ENCODE measurements at regions of chr2 and their contacts with region 1.

Region 1: DNA sequence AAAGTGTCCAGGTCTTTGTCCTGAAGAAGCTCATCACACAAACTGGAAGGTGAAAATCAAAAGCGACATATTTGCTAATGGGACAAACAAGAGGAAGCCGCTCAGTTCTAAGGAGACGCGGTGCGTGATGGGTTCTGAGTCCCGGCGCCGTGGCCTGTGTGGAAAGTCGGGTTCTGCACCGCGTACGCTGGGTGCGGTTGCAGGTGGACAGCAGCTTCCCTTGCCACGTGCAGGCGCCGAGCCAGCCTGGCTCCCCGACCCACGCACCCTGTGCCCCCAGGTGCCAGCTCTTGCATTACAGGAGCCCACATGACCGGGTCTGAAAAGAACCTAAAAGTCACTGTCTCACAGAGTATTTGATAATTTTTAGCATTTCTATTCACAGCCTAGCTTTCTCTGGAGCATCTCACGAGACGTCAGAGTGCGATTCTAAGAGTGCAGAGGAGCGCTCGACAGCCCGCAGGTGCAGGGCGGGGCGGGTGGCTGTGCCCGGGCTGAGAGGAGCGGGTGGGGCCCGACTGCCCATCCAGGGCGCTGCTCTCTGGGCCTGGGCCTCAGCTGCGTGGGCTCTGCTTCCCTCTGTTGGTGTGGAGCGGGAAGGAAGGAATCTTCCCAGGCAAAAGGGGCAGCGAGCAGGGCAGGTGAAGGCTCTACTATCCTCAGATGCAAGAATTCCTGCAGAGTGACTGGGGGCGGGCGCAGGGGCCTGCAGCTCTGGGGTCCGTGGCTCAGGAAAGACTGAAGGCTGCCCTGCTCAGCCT is 39.4 kb downstream of the MYT1L start:
- DNase-seq: peak; percentile 43 to 76
- H3K4me3 ChIP-seq: no peak overlapping the region
- H3K27ac ChIP-seq: no peak overlapping the region
- H3K4me1 ChIP-seq: peaks cover 0 to 2% (median 0%) of the 10 kb centered on the region in 4 experiments; a peak in 1 of 7 replicates
- H3K27me3 ChIP-seq: no peaks in the 10 kb centered on the region; a peak in 1 of 7 replicates
- CTCF ChIP-seq: peak; percentile 84 to 86 (median 85)
- EP300 ChIP-seq: no peak
- POLR2A ChIP-seq: no peak
- RAD21 ChIP-seq: peak; percentile 92 to 95

Region 2: GRCh38 chr2:1900736-1901135 is 390.9 kb before region 1 on chr2:
- CTCF ChIA-PET with region 1: interaction called, 16 read pairs
- POLR2A ChIA-PET with region 1: no interaction called
- DNase-seq: peak; percentile 59 to 72
- H3K4me3 ChIP-seq: no peak overlapping the region
- H3K27ac ChIP-seq: no peak overlapping the region
- H3K4me1 ChIP-seq: no peaks in the 10 kb centered on the region
- H3K27me3 ChIP-seq: no peaks in the 10 kb centered on the region
- CTCF ChIP-seq: peak; percentile 96 to 99 (median 97)
- EP300 ChIP-seq: no peak
- POLR2A ChIP-seq: no peak
- RAD21 ChIP-seq: peak; percentile 80 to 83

Region 3: GRCh38 chr2:1910592-1911246 is 381.0 kb before region 1 on chr2:
- CTCF ChIA-PET with region 1: interaction called, 11 read pairs
- POLR2A ChIA-PET with region 1: no interaction called
- DNase-seq: no peak
- H3K4me3 ChIP-seq: no peak overlapping the region
- H3K27ac ChIP-seq: no peak overlapping the region
- H3K4me1 ChIP-seq: no peaks in the 10 kb centered on the region
- H3K27me3 ChIP-seq: no peaks in the 10 kb centered on the region
- CTCF ChIP-seq: peak in 2 of 3 experiments; percentile 39 to 54; a peak in 3 of 4 replicates
- EP300 ChIP-seq: no peak
- POLR2A ChIP-seq: no peak
- RAD21 ChIP-seq: peak; percentile 72 to 81

Region 4: DNA sequence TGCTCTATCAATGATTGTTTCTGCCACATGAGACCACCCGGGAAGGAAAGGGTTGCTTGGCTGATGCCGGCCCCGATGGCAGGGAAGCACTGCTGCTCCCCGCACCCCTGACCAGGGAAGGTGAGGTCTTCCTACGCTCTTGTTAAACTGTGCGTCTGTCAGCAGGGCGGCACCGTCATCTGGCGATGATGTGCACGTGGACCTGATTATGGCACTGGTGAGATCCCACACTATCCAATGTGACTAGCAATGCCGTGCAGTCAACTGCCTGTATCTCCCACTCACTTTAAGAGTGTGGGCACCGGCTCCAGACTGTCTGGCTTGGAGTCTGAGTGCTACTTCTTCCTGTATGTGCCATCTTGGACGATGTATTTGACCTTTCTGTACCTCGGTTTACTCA is 169.8 kb before region 1 on chr2:
- CTCF ChIA-PET with region 1: interaction called, 21 read pairs
- POLR2A ChIA-PET with region 1: no interaction called
- DNase-seq: no peak
- H3K4me3 ChIP-seq: no peak overlapping the region
- H3K27ac ChIP-seq: no peak overlapping the region
- H3K4me1 ChIP-seq: peaks cover 0 to 8% (median 2%) of the 10 kb centered on the region in 4 experiments; a peak in 3 of 7 replicates
- H3K27me3 ChIP-seq: no peaks in the 10 kb centered on the region
- CTCF ChIP-seq: no peak
- EP300 ChIP-seq: no peak
- POLR2A ChIP-seq: no peak
- RAD21 ChIP-seq: no peak

Region 5: GRCh38 chr2:2368476-2368875 is 76.8 kb after region 1 on chr2:
- CTCF ChIA-PET with region 1: no interaction called
- POLR2A ChIA-PET with region 1: no interaction called
- DNase-seq: no peak
- H3K4me3 ChIP-seq: no peak overlapping the region
- H3K27ac ChIP-seq: no peak overlapping the region
- H3K4me1 ChIP-seq: no peaks in the 10 kb centered on the region
- H3K27me3 ChIP-seq: no peaks in the 10 kb centered on the region
- CTCF ChIP-seq: no peak
- EP300 ChIP-seq: no peak
- POLR2A ChIP-seq: no peak
- RAD21 ChIP-seq: no peak